GM18951 (cell line): ENCODE measurements at regions of chr1 and their contacts with region 1.

Region 1: GRCh38 chr1:153922972-153923925 is at the start of gene GATAD2B:
- POLR2A ChIP-seq: peak; percentile 74

Region 2: GRCh38 chr1:153816283-153816889 is 106.9 kb before region 1 on chr1:
- in situ Hi-C with region 1: no loop called
- POLR2A ChIP-seq: no peak

Region 3: GRCh38 chr1:153827168-153827964 is 95.9 kb before region 1 on chr1:
- in situ Hi-C with region 1: loop called (anchors 10 kb)
- POLR2A ChIP-seq: no peak